ENCODE measurements at regions of chr1 and their contacts with region 1.

Region 1: DNA sequence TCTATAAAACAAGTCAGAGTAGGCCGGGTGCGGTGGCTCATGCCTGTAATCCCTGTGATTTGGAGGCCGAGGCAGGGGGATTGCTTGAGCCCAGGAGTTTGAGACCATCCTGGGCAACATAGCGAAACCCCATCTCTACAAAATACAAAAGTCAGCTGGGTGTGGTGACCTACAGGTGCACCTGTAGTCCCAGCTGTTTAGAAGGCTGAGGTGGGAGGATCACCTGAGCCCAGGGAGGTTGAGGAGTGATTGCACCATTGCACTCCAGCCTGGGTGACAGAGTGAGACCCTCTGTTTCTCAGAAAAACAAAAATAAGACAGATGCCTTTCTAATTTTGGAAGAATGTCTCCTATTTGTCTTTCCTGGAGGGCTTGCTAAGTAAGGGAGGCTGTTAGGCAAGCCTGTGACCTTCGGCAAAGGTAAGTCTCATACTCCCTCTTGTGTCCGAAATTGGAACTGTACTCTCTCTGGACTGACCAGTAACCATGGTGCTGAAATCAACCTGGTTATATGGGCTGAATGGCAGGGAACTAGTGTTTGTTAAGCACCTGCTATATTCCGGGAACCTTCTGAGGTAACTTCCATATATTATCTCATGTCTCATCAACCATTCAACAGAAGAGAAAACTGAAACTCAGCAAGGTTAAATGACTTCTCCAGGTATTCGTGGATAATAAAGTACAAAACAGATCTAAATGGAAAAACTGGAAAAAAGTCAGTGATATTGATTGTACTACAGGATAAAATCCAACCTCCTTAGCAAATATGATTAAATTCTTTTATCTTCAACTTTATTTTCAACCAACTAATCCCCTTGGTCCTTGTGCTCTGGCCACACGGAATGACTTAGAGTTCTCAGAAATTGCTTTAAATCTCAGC is 11.8 kb upstream of the RAB3B start:
- DNase-seq: peak in 8 of 9 donors; percentile 30 to 74 (median 66)
- ATAC-seq: peak; percentile 94
- H3K4me3 ChIP-seq: no peak overlapping the region
- H3K4me3 Mint-ChIP-seq: no peak overlapping the region
- H3K27ac ChIP-seq: no peak overlapping the region
- H3K27ac Mint-ChIP-seq: no peak overlapping the region
- H3K4me1 ChIP-seq: no peaks in the 10 kb centered on the region
- H3K4me1 Mint-ChIP-seq: no peaks in the 10 kb centered on the region
- H3K27me3 ChIP-seq: peaks cover 0 to 5% of the 10 kb centered on the region in 2 donors
- H3K27me3 Mint-ChIP-seq: peaks cover 10 to 38% (median 23%) of the 10 kb centered on the region in 5 donors

Region 2: DNA sequence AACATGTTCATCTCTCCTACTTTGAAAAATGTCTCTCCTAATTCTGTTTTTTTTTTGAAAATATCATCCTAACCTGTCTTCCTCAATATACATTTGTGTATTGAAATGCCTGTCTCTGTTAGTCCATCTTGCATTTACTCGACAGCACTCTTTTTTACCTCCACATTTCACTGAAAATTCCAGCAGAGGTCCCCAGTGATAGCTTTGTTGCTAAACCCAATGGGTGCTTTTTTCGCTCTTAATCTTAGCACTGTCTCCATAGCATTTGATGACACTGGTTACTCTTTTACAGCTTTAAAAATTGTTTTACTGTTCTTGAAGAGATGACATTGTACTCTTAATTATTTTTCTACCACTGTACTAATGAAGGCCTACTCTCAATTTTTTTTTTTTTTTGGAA is 374.6 kb before region 1 on chr1:
- CTCF ChIA-PET with region 1: no interaction called
- POLR2A ChIA-PET with region 1: interaction called, 4 read pairs
- intact Hi-C with region 1: loop called in 1 of 2 experiments (anchors 10 kb)
- DNase-seq: peak in 3 of 9 donors; percentile 9 to 18 (median 14)
- ATAC-seq: no peak
- H3K4me3 ChIP-seq: no peak overlapping the region
- H3K4me3 Mint-ChIP-seq: no peak overlapping the region
- H3K27ac ChIP-seq: no peak overlapping the region
- H3K27ac Mint-ChIP-seq: peak overlapping the region in 1 of 9 donors; percentile 22
- H3K4me1 ChIP-seq: no peaks in the 10 kb centered on the region
- H3K4me1 Mint-ChIP-seq: peaks cover 9 to 57% (median 46%) of the 10 kb centered on the region in 7 donors
- H3K27me3 ChIP-seq: no peaks in the 10 kb centered on the region
- H3K27me3 Mint-ChIP-seq: no peaks in the 10 kb centered on the region

Region 3: GRCh38 chr1:51829058-51829457 is 173.2 kb before region 1 on chr1:
- CTCF ChIA-PET with region 1: no interaction called
- POLR2A ChIA-PET with region 1: no interaction called
- intact Hi-C with region 1: loop called in 1 of 2 experiments (anchors 10 kb)
- DNase-seq: no peak
- ATAC-seq: no peak
- H3K4me3 ChIP-seq: no peak overlapping the region
- H3K4me3 Mint-ChIP-seq: no peak overlapping the region
- H3K27ac ChIP-seq: no peak overlapping the region
- H3K27ac Mint-ChIP-seq: no peak overlapping the region
- H3K4me1 ChIP-seq: no peaks in the 10 kb centered on the region
- H3K4me1 Mint-ChIP-seq: peaks cover 0 to 1% (median 0%) of the 10 kb centered on the region in 7 donors
- H3K27me3 ChIP-seq: no peaks in the 10 kb centered on the region
- H3K27me3 Mint-ChIP-seq: no peaks in the 10 kb centered on the region

Region 4: GRCh38 chr1:51897699-51898031 is 104.6 kb before region 1 on chr1:
- CTCF ChIA-PET with region 1: interaction called, 5 read pairs
- POLR2A ChIA-PET with region 1: no interaction called
- intact Hi-C with region 1: loop called (anchors 1 kb)
- DNase-seq: no peak
- ATAC-seq: no peak
- H3K4me3 ChIP-seq: no peak overlapping the region
- H3K4me3 Mint-ChIP-seq: no peak overlapping the region
- H3K27ac ChIP-seq: no peak overlapping the region
- H3K27ac Mint-ChIP-seq: no peak overlapping the region
- H3K4me1 ChIP-seq: no peaks in the 10 kb centered on the region
- H3K4me1 Mint-ChIP-seq: peaks cover 0 to 4% (median 0%) of the 10 kb centered on the region in 7 donors
- H3K27me3 ChIP-seq: peaks cover 0 to 3% of the 10 kb centered on the region in 2 donors
- H3K27me3 Mint-ChIP-seq: peaks cover 24 to 55% (median 50%) of the 10 kb centered on the region in 5 donors

Region 5: DNA sequence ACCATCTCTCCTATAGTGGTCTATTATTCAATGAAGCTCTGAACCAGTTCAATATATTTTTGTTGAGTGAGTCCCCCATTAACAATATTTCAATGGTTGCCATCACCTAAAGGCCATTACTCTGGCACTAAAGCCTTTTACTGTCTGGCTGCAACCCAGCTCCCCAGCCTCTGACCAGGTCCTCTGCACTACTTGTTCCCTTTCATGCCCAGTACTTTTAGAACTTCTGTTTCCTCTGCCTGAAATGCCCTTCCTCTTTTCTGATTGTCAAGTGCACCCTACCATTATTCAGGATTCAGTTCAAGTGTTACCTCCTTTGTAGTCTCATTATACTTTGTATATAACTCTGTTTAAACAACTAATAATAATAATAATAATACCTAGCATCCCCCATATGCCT is 109.2 kb after region 1 on chr1:
- CTCF ChIA-PET with region 1: no interaction called
- POLR2A ChIA-PET with region 1: no interaction called
- intact Hi-C with region 1: no loop called
- DNase-seq: no peak
- ATAC-seq: no peak
- H3K4me3 ChIP-seq: no peak overlapping the region
- H3K4me3 Mint-ChIP-seq: no peak overlapping the region
- H3K27ac ChIP-seq: no peak overlapping the region
- H3K27ac Mint-ChIP-seq: no peak overlapping the region
- H3K4me1 ChIP-seq: no peaks in the 10 kb centered on the region
- H3K4me1 Mint-ChIP-seq: no peaks in the 10 kb centered on the region
- H3K27me3 ChIP-seq: no peaks in the 10 kb centered on the region
- H3K27me3 Mint-ChIP-seq: peaks cover 0 to 7% (median 0%) of the 10 kb centered on the region in 5 donors